Gastrocnemius medialis (tissue), 4 donors: ENCODE measurements at regions of chr10 and their contacts with region 1.

Region 1: GRCh38 chr10:20858292-20859124 is 38.6 kb downstream of the NEBL start:
- DNase-seq: no peak
- ATAC-seq: no peak
- H3K4me3 ChIP-seq: no peak overlapping the region
- H3K27ac ChIP-seq: no peak overlapping the region
- H3K4me1 ChIP-seq: no peaks in the 10 kb centered on the region
- H3K27me3 ChIP-seq: no peaks in the 10 kb centered on the region
- CTCF ChIP-seq: no peak
- POLR2A ChIP-seq: no peak

Region 2: GRCh38 chr10:21265621-21266020 is 407.1 kb after region 1 on chr10:
- in situ Hi-C with region 1: loop called in 1 of 4 experiments (anchors 25 kb)
- intact Hi-C with region 1: no loop called
- DNase-seq: no peak
- ATAC-seq: no peak
- H3K4me3 ChIP-seq: no peak overlapping the region
- H3K27ac ChIP-seq: no peak overlapping the region
- H3K4me1 ChIP-seq: no peaks in the 10 kb centered on the region
- H3K27me3 ChIP-seq: no peaks in the 10 kb centered on the region
- CTCF ChIP-seq: no peak
- POLR2A ChIP-seq: no peak